Dorsolateral prefrontal cortex (tissue), 120 donors: ENCODE measurements at regions of chr1 and their contacts with region 1.

Region 1: GRCh38 chr1:52702886-52703787 is 5.0 kb upstream of the COA7 start:
- DNase-seq: peak; percentile 80 to 98 (median 95)
- H3K4me3 ChIP-seq: peak overlapping the region; percentile 52 to 90 (median 71)
- H3K27ac ChIP-seq: peak overlapping the region; percentile 22 to 97 (median 90)
- H3K27me3 ChIP-seq: no peaks in the 10 kb centered on the region
- CTCF ChIP-seq: peak in 7 of 56 donors; percentile 5 to 29 (median 13)

Region 2: GRCh38 chr1:52141513-52142219 is 561.5 kb before region 1 on chr1 and contains the start of gene ZFYVE9:
- intact Hi-C with region 1: no loop called
- DNase-seq: peak; percentile 32 to 84 (median 61)
- H3K4me3 ChIP-seq: peak within 1 kb of the TSS; percentile 57 to 97 (median 85)
- H3K27ac ChIP-seq: peak within 1 kb of the TSS; percentile 55 to 98 (median 93)
- H3K27me3 ChIP-seq: no peaks in the 10 kb centered on the region
- CTCF ChIP-seq: peak in 55 of 56 donors; percentile 13 to 91 (median 62)
- total RNA-seq, gene ZFYVE9: 28.8 to 91.5 (median 70.2) TPM

Region 3: GRCh38 chr1:52726265-52727113 is 23.4 kb after region 1 on chr1 and contains the start of gene ZYG11B:
- intact Hi-C with region 1: loop called (anchors 1 kb)
- DNase-seq: peak; percentile 79 to 91 (median 85)
- H3K4me3 ChIP-seq: peak within 1 kb of the TSS; percentile 58 to 98 (median 91)
- H3K27ac ChIP-seq: peak within 1 kb of the TSS in 56 of 59 donors; percentile 18 to 92 (median 83)
- H3K27me3 ChIP-seq: no peaks in the 10 kb centered on the region
- CTCF ChIP-seq: peak in 21 of 56 donors; percentile 12 to 47 (median 29)
- total RNA-seq, gene ZYG11B: 45.4 to 96.2 (median 73.5) TPM

Region 4: GRCh38 chr1:52739699-52740467 is 36.7 kb after region 1 on chr1:
- intact Hi-C with region 1: no loop called
- DNase-seq: no peak
- H3K4me3 ChIP-seq: no peak overlapping the region
- H3K27ac ChIP-seq: peak overlapping the region in 2 of 59 donors; percentile 5 to 46
- H3K27me3 ChIP-seq: no peaks in the 10 kb centered on the region
- CTCF ChIP-seq: no peak